Activated T-helper 2 cell treated with anti-CD3 and anti-CD28 coated beads, Interferon-gamma antibody, Interleukin-2, Interleukin-4, amounts not matched to agents 10 μg/mL and 5 μg/mL and 100 μg/mL, durations not matched to agents 14 hours and 24 hours and 36 hours (primary cell): ENCODE measurements at regions of chr9 and their contacts with region 1.

Region 1: GRCh38 chr9:129944506-129945116 is 98.4 kb downstream of the FNBP1 start:
- DNase-seq: peak; percentile 54
- H3K4me3 Mint-ChIP-seq: peak overlapping the region; percentile 20
- H3K27ac Mint-ChIP-seq: peak overlapping the region; percentile 80
- H3K4me1 Mint-ChIP-seq: peaks cover 41% of the 10 kb centered on the region
- H3K27me3 Mint-ChIP-seq: no peaks in the 10 kb centered on the region

Region 2: GRCh38 chr9:129802851-129803675 is 141.5 kb before region 1 on chr9 and contains the start of gene TOR1B:
- intact Hi-C with region 1: no loop called
- DNase-seq: peak; percentile 92
- H3K4me3 Mint-ChIP-seq: peak within 1 kb of the TSS; percentile 88
- H3K27ac Mint-ChIP-seq: peak within 1 kb of the TSS; percentile 85
- H3K4me1 Mint-ChIP-seq: peaks cover 21% of the 10 kb centered on the region
- H3K27me3 Mint-ChIP-seq: no peaks in the 10 kb centered on the region
- total RNA-seq, gene TOR1B: 23.9 and 25.2 TPM in 2 replicates

Region 3: GRCh38 chr9:129910628-129911567 is 33.7 kb before region 1 on chr9:
- intact Hi-C with region 1: no loop called
- DNase-seq: no peak
- H3K4me3 Mint-ChIP-seq: no peak overlapping the region
- H3K27ac Mint-ChIP-seq: peak overlapping the region; percentile 51
- H3K4me1 Mint-ChIP-seq: peaks cover 31% of the 10 kb centered on the region
- H3K27me3 Mint-ChIP-seq: no peaks in the 10 kb centered on the region

Region 4: DNA sequence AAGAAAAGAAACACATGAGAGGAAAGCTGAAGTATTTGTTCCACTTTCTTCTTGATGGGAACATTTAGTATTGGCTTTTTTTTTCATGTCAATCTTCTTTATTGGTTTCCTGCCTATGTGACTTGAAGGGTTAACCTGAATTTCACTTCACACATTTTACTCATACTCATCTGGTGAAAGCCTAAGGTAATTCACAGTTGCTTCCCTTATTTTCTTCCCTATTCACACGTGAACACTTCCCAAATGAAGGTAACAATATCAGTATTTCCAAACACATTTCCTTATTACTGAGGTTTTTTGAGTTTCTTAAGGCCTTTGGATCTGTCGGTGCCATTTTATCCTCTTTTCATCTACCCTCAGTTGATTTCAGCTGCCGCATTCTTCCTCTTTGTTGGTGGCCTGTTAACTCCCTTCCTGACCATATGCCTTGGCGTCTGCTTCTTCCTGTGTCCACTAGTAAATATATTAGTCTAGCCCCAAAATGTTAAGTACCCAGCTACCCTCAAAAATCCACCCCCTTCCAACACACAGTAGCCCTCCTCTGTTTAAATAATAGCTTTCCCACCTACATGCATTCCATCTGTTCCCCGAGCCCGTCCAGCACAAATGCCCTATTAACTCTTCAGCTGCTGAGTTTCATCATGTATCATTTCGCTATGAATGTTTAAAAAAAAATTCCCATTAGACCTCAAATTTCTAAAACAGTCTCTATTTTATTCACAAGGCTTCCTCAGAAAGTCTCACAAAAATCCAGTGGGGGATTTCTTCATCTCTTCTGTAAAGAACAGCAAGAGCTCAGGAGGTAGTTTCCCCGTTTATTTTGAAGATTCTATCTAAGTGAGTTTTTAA is 12.1 kb before region 1 on chr9:
- intact Hi-C with region 1: loop called (anchors 2 kb)
- DNase-seq: no peak
- H3K4me3 Mint-ChIP-seq: peak overlapping the region; percentile 59
- H3K27ac Mint-ChIP-seq: peak overlapping the region; percentile 86
- H3K4me1 Mint-ChIP-seq: peaks cover 61% of the 10 kb centered on the region
- H3K27me3 Mint-ChIP-seq: no peaks in the 10 kb centered on the region

Region 5: GRCh38 chr9:129954868-129955550 is 10.4 kb after region 1 on chr9:
- intact Hi-C with region 1: loop called (anchors 1 kb)
- DNase-seq: no peak
- H3K4me3 Mint-ChIP-seq: no peak overlapping the region
- H3K27ac Mint-ChIP-seq: peak overlapping the region; percentile 33
- H3K4me1 Mint-ChIP-seq: peaks cover 38% of the 10 kb centered on the region
- H3K27me3 Mint-ChIP-seq: no peaks in the 10 kb centered on the region

Region 6: DNA sequence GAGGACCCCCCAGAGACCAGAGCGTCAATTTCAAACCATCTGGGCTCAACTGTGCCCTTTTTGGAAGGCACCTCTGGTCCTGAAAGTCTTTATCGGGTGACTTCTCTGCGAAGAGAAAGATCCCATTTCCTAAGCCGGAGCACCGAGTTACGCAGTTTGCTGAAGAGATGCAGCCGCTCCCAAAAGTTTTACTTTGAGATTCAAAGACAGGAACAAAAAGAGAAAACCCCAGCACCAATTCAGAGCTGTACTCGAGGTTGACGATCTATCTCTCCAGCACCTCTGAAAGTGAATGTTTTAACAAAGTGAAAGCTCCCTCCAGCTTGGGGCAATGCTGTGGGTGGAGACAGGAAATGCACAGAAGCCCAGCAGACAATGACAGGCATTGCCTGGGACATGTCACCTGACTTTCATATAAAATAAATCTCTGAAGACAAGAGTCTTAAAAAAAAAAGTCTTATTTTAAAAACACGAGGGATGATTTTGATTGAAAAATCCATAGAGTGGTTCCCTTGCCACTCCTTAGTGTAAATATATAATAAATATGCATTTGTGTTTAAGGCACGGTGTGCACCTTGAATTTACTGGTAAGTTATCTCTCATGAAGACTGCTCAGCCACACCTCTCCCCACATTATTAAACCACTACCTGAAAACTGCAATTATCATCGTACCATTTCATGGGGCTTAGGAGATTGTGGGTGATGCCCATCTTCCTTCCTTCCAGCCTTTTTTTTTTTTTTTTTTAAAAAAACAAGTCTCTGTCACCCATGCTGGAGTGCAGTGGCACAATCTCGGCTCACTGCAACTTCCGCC is 18.5 kb after region 1 on chr9:
- intact Hi-C with region 1: loop called (anchors 2 kb)
- DNase-seq: peak; percentile 76
- H3K4me3 Mint-ChIP-seq: peak overlapping the region; percentile 80
- H3K27ac Mint-ChIP-seq: peak overlapping the region; percentile 89
- H3K4me1 Mint-ChIP-seq: peaks cover 67% of the 10 kb centered on the region
- H3K27me3 Mint-ChIP-seq: no peaks in the 10 kb centered on the region

Region 7: GRCh38 chr9:130034570-130034969 is 90.0 kb after region 1 on chr9:
- intact Hi-C with region 1: loop called (anchors 5 kb)
- DNase-seq: no peak
- H3K4me3 Mint-ChIP-seq: peak overlapping the region; percentile 38
- H3K27ac Mint-ChIP-seq: peak overlapping the region; percentile 93
- H3K4me1 Mint-ChIP-seq: peaks cover 75% of the 10 kb centered on the region
- H3K27me3 Mint-ChIP-seq: no peaks in the 10 kb centered on the region